Activated naive CD4-positive, alpha-beta T cell treated with anti-CD3 and anti-CD28 coated beads for 36 hours (primary cell): ENCODE measurements at regions of chr14 and their contacts with region 1.

Region 1: GRCh38 chr14:100906420-100906819 is 2.9 kb upstream of the RTL1 start:
- DNase-seq: no peak
- H3K4me3 Mint-ChIP-seq: no peak overlapping the region
- H3K27ac Mint-ChIP-seq: no peak overlapping the region
- H3K4me1 Mint-ChIP-seq: no peaks in the 10 kb centered on the region
- H3K27me3 Mint-ChIP-seq: peaks cover 33% of the 10 kb centered on the region

Region 2: DNA sequence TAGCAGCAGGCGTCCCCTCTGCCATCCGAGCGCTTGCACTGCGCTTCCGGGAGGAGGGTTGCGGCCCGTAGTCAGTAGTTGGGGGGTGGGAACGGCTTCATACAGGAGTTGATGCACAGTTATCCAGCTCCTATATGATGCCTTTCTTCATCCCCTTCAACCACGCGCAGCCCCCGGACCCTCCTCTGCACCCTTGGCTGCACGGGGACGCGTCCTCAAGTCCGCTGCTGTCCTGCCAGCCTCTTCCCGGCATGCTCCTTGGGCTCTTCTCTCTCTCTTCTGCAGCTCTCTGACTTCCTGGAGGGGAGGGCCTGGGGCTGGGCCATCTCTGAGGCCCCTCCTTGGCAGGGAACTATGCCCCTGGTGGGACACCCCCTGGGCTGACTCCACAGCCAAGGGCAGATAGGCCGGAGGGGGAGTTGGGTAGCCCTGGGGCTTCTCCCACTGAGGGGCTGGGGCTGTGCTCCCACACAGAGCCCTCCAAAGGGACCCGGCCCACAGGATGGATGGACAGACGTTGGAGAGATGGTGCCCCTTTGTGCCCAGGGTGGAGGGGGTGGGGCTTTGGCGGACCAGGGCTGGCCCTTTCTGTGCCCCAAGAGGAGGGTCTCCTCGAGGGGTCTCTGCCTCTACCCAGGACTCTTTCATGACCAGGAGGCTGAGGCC is 31.9 kb before region 1 on chr14:
- CTCF ChIA-PET with region 1: no interaction called
- intact Hi-C with region 1: no loop called
- DNase-seq: no peak
- H3K4me3 Mint-ChIP-seq: no peak overlapping the region
- H3K27ac Mint-ChIP-seq: no peak overlapping the region
- H3K4me1 Mint-ChIP-seq: no peaks in the 10 kb centered on the region
- H3K27me3 Mint-ChIP-seq: no peaks in the 10 kb centered on the region

Region 3: GRCh38 chr14:101019990-101020710 is 113.7 kb after region 1 on chr14:
- CTCF ChIA-PET with region 1: no interaction called
- intact Hi-C with region 1: no loop called
- DNase-seq: no peak
- H3K4me3 Mint-ChIP-seq: no peak overlapping the region
- H3K27ac Mint-ChIP-seq: no peak overlapping the region
- H3K4me1 Mint-ChIP-seq: no peaks in the 10 kb centered on the region
- H3K27me3 Mint-ChIP-seq: peaks cover 23% of the 10 kb centered on the region

Region 4: GRCh38 chr14:101628471-101628966 is 722.1 kb after region 1 on chr14:
- CTCF ChIA-PET with region 1: no interaction called
- intact Hi-C with region 1: loop called (anchors 2 kb)
- DNase-seq: peak; percentile 75
- H3K4me3 Mint-ChIP-seq: no peak overlapping the region
- H3K27ac Mint-ChIP-seq: no peak overlapping the region
- H3K4me1 Mint-ChIP-seq: no peaks in the 10 kb centered on the region
- H3K27me3 Mint-ChIP-seq: no peaks in the 10 kb centered on the region